ENCODE measurements at regions of chr2 and their contacts with region 1.

Region 1: GRCh38 chr2:97806738-97807618 is 93.6 kb downstream of the ZAP70 start:
- DNase-seq: peak; percentile 63 to 71 (median 68)
- H3K4me3 ChIP-seq: no peak overlapping the region
- H3K4me3 Mint-ChIP-seq: no peak overlapping the region
- H3K27ac ChIP-seq: no peak overlapping the region
- H3K27ac Mint-ChIP-seq: no peak overlapping the region
- H3K4me1 ChIP-seq: no peaks in the 10 kb centered on the region
- H3K4me1 Mint-ChIP-seq: peaks cover 0 to 3% (median 0%) of the 10 kb centered on the region in 4 donors
- H3K27me3 ChIP-seq: no peaks in the 10 kb centered on the region
- H3K27me3 Mint-ChIP-seq: no peaks in the 10 kb centered on the region

Region 2: GRCh38 chr2:97792416-97792815 is 14.6 kb before region 1 on chr2:
- CTCF ChIA-PET with region 1: interaction called, 14 read pairs
- POLR2A ChIA-PET with region 1: no interaction called
- intact Hi-C with region 1: no loop called
- DNase-seq: no peak
- H3K4me3 ChIP-seq: no peak overlapping the region
- H3K4me3 Mint-ChIP-seq: no peak overlapping the region
- H3K27ac ChIP-seq: no peak overlapping the region
- H3K27ac Mint-ChIP-seq: no peak overlapping the region
- H3K4me1 ChIP-seq: no peaks in the 10 kb centered on the region
- H3K4me1 Mint-ChIP-seq: peaks cover 0 to 2% (median under 1%) of the 10 kb centered on the region in 4 donors
- H3K27me3 ChIP-seq: no peaks in the 10 kb centered on the region
- H3K27me3 Mint-ChIP-seq: no peaks in the 10 kb centered on the region

Region 3: GRCh38 chr2:97979894-97980293 is 172.9 kb after region 1 on chr2:
- CTCF ChIA-PET with region 1: no interaction called
- POLR2A ChIA-PET with region 1: no interaction called
- intact Hi-C with region 1: no loop called
- DNase-seq: no peak
- H3K4me3 ChIP-seq: no peak overlapping the region
- H3K4me3 Mint-ChIP-seq: no peak overlapping the region
- H3K27ac ChIP-seq: no peak overlapping the region
- H3K27ac Mint-ChIP-seq: peak overlapping the region in 1 of 7 donors; percentile 57
- H3K4me1 ChIP-seq: peaks cover 4% of the 10 kb centered on the region
- H3K4me1 Mint-ChIP-seq: peaks cover 32 to 67% (median 47%) of the 10 kb centered on the region in 4 donors
- H3K27me3 ChIP-seq: no peaks in the 10 kb centered on the region
- H3K27me3 Mint-ChIP-seq: no peaks in the 10 kb centered on the region

Region 4: GRCh38 chr2:98269274-98269673 is 462.3 kb after region 1 on chr2:
- CTCF ChIA-PET with region 1: interaction called, 26 read pairs
- POLR2A ChIA-PET with region 1: no interaction called
- intact Hi-C with region 1: no loop called
- DNase-seq: peak in 2 of 5 donors; percentile 2 to 5
- H3K4me3 ChIP-seq: no peak overlapping the region
- H3K4me3 Mint-ChIP-seq: no peak overlapping the region
- H3K27ac ChIP-seq: no peak overlapping the region
- H3K27ac Mint-ChIP-seq: no peak overlapping the region
- H3K4me1 ChIP-seq: no peaks in the 10 kb centered on the region
- H3K4me1 Mint-ChIP-seq: no peaks in the 10 kb centered on the region
- H3K27me3 ChIP-seq: no peaks in the 10 kb centered on the region
- H3K27me3 Mint-ChIP-seq: peaks cover 8% of the 10 kb centered on the region in 2 donors

Region 5: DNA sequence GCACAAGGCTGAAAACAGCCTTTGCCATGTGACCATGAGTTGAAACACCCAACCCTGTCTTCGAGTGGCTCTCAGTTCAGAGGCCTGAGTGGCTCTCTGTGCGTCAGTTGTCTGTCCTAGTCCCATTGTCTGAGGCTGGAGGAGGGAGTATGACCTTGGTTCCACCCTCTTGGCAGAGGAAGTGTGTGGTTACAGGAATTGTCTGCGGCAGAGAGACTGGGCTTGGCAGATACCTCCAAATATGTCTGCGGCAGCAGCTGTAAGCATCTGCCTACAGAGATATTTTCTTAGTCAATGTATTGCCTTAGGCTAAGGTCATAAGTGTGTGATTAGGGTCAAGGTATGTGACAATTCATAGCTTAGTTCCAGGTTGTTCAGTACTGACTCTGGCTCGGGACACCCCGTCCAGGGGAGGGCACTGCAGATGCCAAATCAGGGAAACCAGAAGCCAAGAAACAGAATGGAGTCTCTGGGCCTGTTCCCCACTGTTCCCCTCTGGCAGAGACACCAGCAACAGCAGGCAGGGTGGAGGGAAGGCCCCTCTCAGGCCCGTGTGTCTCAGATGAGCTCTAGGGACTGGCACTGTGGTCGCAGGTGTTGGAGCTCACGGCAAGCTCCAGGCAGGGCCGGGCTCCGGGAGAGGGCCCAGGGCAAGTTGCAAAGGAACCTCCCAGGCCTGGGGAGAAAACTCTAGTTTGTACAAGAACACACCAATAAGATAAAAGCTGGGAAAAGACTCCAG is 572.1 kb after region 1 on chr2:
- CTCF ChIA-PET with region 1: interaction called, 71 read pairs
- POLR2A ChIA-PET with region 1: no interaction called
- intact Hi-C with region 1: no loop called
- DNase-seq: no peak
- H3K4me3 ChIP-seq: no peak overlapping the region
- H3K4me3 Mint-ChIP-seq: no peak overlapping the region
- H3K27ac ChIP-seq: no peak overlapping the region
- H3K27ac Mint-ChIP-seq: no peak overlapping the region
- H3K4me1 ChIP-seq: no peaks in the 10 kb centered on the region
- H3K4me1 Mint-ChIP-seq: no peaks in the 10 kb centered on the region
- H3K27me3 ChIP-seq: no peaks in the 10 kb centered on the region
- H3K27me3 Mint-ChIP-seq: peaks cover 6 to 10% of the 10 kb centered on the region in 2 donors

Region 6: DNA sequence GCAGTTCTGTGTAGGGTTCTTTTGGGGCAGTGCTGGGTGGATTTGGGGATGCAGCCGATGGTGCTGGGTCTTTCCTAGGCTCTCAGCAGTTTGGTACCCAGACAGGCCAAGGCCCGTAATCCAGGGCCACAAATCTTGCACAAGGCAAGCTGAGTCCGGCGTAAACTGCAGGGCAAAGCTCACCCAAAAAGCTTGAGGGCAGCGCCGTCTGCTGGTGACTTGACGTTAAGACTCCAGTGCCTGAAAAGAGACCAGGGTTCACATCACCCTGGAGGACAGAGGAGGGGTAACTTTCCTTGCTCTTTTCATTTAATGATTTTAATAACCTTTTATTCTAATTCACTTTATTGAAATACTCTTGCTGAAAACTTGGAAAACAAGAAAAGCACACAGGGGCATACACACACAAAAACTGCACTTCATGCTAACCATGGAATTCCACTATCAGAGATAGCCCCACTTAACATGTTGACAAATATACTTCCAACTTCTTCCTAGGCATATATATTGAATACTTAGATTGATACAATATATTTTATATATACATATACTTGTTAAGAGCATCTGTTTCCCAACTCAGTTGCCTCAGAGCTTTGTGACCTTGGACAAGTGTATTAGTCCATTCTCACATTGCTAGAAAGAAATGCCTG is 578.2 kb after region 1 on chr2:
- CTCF ChIA-PET with region 1: interaction called, 71 read pairs
- POLR2A ChIA-PET with region 1: no interaction called
- intact Hi-C with region 1: loop called (anchors 1 kb)
- DNase-seq: peak; percentile 50 to 62 (median 53)
- H3K4me3 ChIP-seq: no peak overlapping the region
- H3K4me3 Mint-ChIP-seq: peak overlapping the region in 1 of 8 donors; percentile 49
- H3K27ac ChIP-seq: no peak overlapping the region
- H3K27ac Mint-ChIP-seq: no peak overlapping the region
- H3K4me1 ChIP-seq: no peaks in the 10 kb centered on the region
- H3K4me1 Mint-ChIP-seq: peaks cover 0 to 3% (median 1%) of the 10 kb centered on the region in 4 donors
- H3K27me3 ChIP-seq: no peaks in the 10 kb centered on the region
- H3K27me3 Mint-ChIP-seq: peaks cover 0 to 10% of the 10 kb centered on the region in 2 donors

Region 7: GRCh38 chr2:98835831-98836385 is 1028.9 kb after region 1 on chr2:
- CTCF ChIA-PET with region 1: interaction called, 3 read pairs
- POLR2A ChIA-PET with region 1: no interaction called
- intact Hi-C with region 1: loop called (anchors 1 kb)
- DNase-seq: peak; percentile 66 to 88 (median 79)
- H3K4me3 ChIP-seq: peak overlapping the region in 1 of 2 donors; percentile 22
- H3K4me3 Mint-ChIP-seq: peak overlapping the region; percentile 43 to 77 (median 64)
- H3K27ac ChIP-seq: peak overlapping the region; percentile 54
- H3K27ac Mint-ChIP-seq: peak overlapping the region; percentile 88 to 99 (median 97)
- H3K4me1 ChIP-seq: peaks cover 40% of the 10 kb centered on the region
- H3K4me1 Mint-ChIP-seq: peaks cover 36 to 53% (median 44%) of the 10 kb centered on the region in 4 donors
- H3K27me3 ChIP-seq: no peaks in the 10 kb centered on the region
- H3K27me3 Mint-ChIP-seq: no peaks in the 10 kb centered on the region